Dendritic cell treated with granulocyte-macrophage colony-stimulating factor and Interleukin-4, amounts not matched to agents 40 ng/mL and 50 ng/mL, for 4 days (primary cell): ENCODE measurements at regions of chr14 and their contacts with region 1.

Region 1: GRCh38 chr14:70692226-70692625 is 50.5 kb downstream of the TTC9 start:
- H3K4me3 Mint-ChIP-seq: no peak overlapping the region
- H3K27ac Mint-ChIP-seq: peak overlapping the region; percentile 89
- H3K4me1 Mint-ChIP-seq: peaks cover 51% of the 10 kb centered on the region
- H3K27me3 Mint-ChIP-seq: no peaks in the 10 kb centered on the region

Region 2: GRCh38 chr14:70640938-70641547 is 51.2 kb before region 1 on chr14:
- intact Hi-C with region 1: loop called (anchors 5 kb)
- H3K4me3 Mint-ChIP-seq: peak overlapping the region; percentile 80
- H3K27ac Mint-ChIP-seq: peak overlapping the region; percentile 73
- H3K4me1 Mint-ChIP-seq: peaks cover 46% of the 10 kb centered on the region
- H3K27me3 Mint-ChIP-seq: peaks cover 42% of the 10 kb centered on the region

Region 3: GRCh38 chr14:71415404-71415690 is 723.1 kb after region 1 on chr14:
- intact Hi-C with region 1: no loop called
- H3K4me3 Mint-ChIP-seq: no peak overlapping the region
- H3K27ac Mint-ChIP-seq: no peak overlapping the region
- H3K4me1 Mint-ChIP-seq: peaks cover 40% of the 10 kb centered on the region
- H3K27me3 Mint-ChIP-seq: no peaks in the 10 kb centered on the region